ENCODE measurements at regions of chr15 and their contacts with region 1.

Region 1: DNA sequence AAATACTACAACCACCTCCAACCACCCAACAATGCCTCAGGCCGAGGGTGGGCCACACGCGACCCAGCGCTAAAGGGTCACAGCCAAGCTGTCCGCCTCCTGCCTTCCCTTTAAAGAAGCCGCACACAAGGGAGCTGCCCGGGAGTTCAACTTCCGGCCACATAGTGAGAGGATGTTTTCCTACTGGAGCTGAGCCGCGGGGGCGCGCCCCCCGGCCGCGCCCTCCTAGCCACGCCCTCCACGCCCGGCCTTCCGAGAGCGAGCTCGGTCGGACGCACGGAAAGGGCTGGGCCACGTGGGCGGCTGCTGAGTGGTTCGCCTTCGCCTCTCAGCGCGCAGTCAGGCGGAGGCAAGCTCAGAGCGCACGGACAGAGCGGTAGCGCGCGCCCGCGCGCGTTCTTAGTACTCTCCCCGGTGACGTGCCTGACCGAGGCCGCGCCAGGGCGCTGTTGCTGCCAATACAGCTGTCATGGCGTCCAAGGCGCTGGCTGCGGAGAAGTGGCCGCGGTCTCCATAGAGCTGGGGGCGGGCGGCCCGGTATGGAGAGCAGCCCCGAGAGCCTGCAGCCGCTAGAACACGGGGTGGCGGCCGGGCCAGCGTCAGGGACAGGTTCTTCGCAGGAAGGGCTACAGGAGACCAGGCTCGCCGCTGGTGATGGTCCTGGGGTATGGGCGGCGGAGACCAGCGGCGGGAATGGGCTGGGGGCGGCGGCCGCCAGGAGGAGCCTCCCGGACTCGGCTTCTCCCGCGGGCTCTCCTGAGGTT is at the start of gene MINDY2:
- DNase-seq: peak; percentile 87 to 96 (median 90)
- H3K4me3 ChIP-seq: peak within 1 kb of the TSS; percentile 58
- H3K4me3 Mint-ChIP-seq: peak within 1 kb of the TSS in 2 of 7 donors; percentile 26 to 98
- H3K27ac ChIP-seq: peak within 1 kb of the TSS; percentile 86
- H3K27ac Mint-ChIP-seq: peak within 1 kb of the TSS; percentile 78 to 97 (median 92)
- H3K4me1 ChIP-seq: peaks cover 35% of the 10 kb centered on the region
- H3K4me1 Mint-ChIP-seq: peaks cover 8 to 18% (median 9%) of the 10 kb centered on the region in 3 donors
- H3K27me3 ChIP-seq: no peaks in the 10 kb centered on the region
- H3K27me3 Mint-ChIP-seq: no peaks in the 10 kb centered on the region
- total RNA-seq, gene MINDY2: 9.6 to 12.1 TPM

Region 2: DNA sequence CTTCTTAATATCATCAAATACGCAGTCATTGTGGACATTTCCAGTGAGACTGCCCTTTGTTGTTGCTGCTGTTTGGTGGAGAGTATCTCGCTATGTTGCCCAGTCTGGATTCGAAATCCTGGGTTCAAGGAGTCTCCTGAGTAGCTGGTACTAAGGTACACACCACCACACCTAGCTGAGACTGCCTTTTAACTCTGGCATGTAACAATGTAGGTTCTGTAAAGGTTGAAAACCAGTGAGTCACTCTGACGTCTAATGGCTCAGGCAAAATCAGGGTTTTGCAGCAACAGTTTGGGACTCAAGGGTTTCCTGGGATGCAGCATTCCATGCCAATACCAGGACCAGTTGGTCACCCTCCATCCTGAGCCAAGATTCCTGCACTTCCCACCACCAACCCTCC is 580.6 kb before region 1 on chr15:
- CTCF ChIA-PET with region 1: no interaction called
- POLR2A ChIA-PET with region 1: no interaction called
- DNase-seq: no peak
- H3K4me3 ChIP-seq: no peak overlapping the region
- H3K4me3 Mint-ChIP-seq: no peak overlapping the region
- H3K27ac ChIP-seq: no peak overlapping the region
- H3K27ac Mint-ChIP-seq: no peak overlapping the region
- H3K4me1 ChIP-seq: no peaks in the 10 kb centered on the region
- H3K4me1 Mint-ChIP-seq: no peaks in the 10 kb centered on the region
- H3K27me3 ChIP-seq: peaks cover 10% of the 10 kb centered on the region
- H3K27me3 Mint-ChIP-seq: peaks cover 21 to 70% of the 10 kb centered on the region in 2 donors

Region 3: DNA sequence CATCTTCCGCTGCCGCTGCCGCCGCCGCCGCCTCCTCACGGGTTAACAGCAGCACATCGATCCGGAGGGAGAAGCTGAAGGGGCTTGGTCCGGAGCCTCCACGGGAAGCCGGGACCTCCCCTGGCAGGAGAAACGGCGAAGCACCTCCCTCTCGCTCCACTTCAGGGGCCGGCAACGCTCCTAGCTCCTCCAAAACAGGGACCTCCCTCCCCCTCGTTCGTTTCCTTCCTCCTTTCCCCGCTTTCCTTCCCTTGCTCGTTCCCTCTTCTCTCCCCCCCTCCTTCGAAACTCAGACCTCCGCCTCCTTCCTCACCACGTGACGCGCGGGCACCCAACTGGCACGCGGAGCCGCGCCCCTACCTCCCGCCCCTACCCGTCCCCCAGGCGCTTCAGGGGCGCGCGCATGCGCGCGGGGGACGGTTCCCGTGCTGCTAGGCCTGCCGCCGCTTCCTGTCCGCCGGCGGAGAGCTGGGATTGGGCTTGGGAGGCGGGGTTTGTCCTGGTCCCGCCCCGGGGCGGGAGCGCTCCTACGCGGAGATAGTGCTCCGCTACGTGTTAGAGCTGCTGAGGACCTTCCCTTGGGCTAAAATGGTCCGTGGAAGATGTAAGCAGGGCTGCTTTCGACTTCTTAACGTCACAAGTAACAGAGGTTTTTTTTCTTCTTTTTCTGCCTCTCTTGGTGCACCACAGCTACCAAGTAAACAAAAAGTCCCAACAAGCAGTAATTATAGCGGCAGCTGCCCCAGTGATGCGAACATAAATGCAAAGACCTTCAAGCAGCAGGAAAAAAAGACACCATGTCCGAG is 21.3 kb before region 1 on chr15 and contains the start of gene ADAM10:
- CTCF ChIA-PET with region 1: interaction called, 58 read pairs
- POLR2A ChIA-PET with region 1: interaction called, 79 read pairs
- DNase-seq: peak; percentile 92 to 99 (median 99)
- H3K4me3 ChIP-seq: peak within 1 kb of the TSS; percentile 84
- H3K4me3 Mint-ChIP-seq: peak within 1 kb of the TSS; percentile 95 to 100 (median 99)
- H3K27ac ChIP-seq: peak within 1 kb of the TSS; percentile 88
- H3K27ac Mint-ChIP-seq: peak within 1 kb of the TSS; percentile 91 to 97 (median 95)
- H3K4me1 ChIP-seq: peaks cover 33% of the 10 kb centered on the region
- H3K4me1 Mint-ChIP-seq: peaks cover 36 to 48% (median 47%) of the 10 kb centered on the region in 3 donors
- H3K27me3 ChIP-seq: no peaks in the 10 kb centered on the region
- H3K27me3 Mint-ChIP-seq: peaks cover 0 to 4% of the 10 kb centered on the region in 2 donors
- total RNA-seq, gene ADAM10: 81.6 to 86.6 TPM

Region 4: GRCh38 chr15:58761010-58761388 is 10.0 kb before region 1 on chr15:
- CTCF ChIA-PET with region 1: interaction called, 21 read pairs
- POLR2A ChIA-PET with region 1: no interaction called
- DNase-seq: no peak
- H3K4me3 ChIP-seq: no peak overlapping the region
- H3K4me3 Mint-ChIP-seq: no peak overlapping the region
- H3K27ac ChIP-seq: no peak overlapping the region
- H3K27ac Mint-ChIP-seq: no peak overlapping the region
- H3K4me1 ChIP-seq: no peaks in the 10 kb centered on the region
- H3K4me1 Mint-ChIP-seq: no peaks in the 10 kb centered on the region
- H3K27me3 ChIP-seq: no peaks in the 10 kb centered on the region
- H3K27me3 Mint-ChIP-seq: peaks cover 4 to 17% of the 10 kb centered on the region in 2 donors

Region 5: DNA sequence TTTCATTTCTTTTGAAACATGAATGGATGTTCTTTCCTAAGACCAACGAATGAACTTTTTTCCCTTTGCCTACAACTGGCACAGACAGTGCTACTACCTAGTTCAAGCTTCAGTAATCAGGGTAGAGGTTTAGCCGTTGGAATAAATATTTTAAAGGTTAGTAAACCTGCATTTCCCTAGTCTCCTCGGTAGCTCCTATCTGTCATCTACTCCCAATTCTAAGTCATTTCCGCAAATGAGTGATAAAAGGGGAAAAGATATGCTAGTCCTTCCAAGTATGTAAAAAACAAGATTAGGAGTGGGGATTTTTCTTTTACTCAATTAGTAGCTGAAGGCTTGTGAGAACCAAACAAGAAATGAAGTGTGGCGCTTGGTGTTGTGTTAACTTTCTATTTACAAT is 147.2 kb after region 1 on chr15:
- CTCF ChIA-PET with region 1: no interaction called
- POLR2A ChIA-PET with region 1: no interaction called
- DNase-seq: no peak
- H3K4me3 ChIP-seq: no peak overlapping the region
- H3K4me3 Mint-ChIP-seq: no peak overlapping the region
- H3K27ac ChIP-seq: no peak overlapping the region
- H3K27ac Mint-ChIP-seq: peak overlapping the region in 2 of 8 donors; percentile 29 to 37
- H3K4me1 ChIP-seq: peaks cover 15% of the 10 kb centered on the region
- H3K4me1 Mint-ChIP-seq: peaks cover 42 to 62% (median 56%) of the 10 kb centered on the region in 3 donors
- H3K27me3 ChIP-seq: no peaks in the 10 kb centered on the region
- H3K27me3 Mint-ChIP-seq: no peaks in the 10 kb centered on the region

Measured in CD8-positive, alpha-beta memory T cell (primary cell).